Naive thymus-derived CD8-positive, alpha-beta T cell (primary cell): ENCODE measurements at regions of chr17 and their contacts with region 1.

Region 1: DNA sequence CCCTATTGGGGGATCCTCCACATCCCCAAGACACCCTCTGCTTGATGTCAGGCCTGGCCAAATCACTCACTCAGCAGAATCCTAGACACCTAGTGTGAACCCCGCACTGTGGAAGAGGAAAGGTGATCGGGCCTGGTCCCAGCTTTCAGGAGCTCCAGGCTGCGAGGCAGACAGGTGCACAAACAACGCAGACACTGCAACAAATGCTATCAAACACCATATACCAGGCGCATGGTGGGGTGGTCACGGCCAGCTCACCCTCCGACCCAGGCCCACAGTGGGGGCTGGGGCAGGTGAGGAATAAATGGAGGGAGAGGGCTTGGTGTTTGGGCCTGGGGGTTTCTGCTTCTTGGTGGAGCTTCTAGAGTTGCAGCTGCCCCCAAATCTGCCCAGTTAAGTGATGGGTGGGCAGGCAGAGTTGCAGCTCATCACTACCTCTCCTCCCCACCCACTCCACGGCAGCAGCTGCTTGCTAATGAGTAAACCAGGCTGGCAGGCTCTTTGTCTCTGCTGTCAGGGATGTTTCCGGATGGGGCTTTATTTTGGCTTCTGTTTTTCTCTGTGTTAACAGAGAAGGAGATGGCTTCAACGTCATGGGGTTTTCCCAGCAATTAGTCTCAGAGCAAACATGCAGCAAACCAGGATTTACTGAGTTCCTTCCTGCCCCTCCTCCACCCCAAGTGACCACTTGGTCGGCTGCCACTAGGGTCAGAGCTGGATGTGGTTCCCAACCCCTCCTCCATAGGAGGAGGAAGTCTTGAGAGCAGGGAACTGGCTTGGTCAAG is 46.6 kb downstream of the PECAM1 start:
- DNase-seq: no peak
- ATAC-seq: no peak
- H3K4me3 Mint-ChIP-seq: no peak overlapping the region
- H3K27ac Mint-ChIP-seq: peak overlapping the region in 9 of 10 donors; percentile 43 to 83 (median 79)
- H3K4me1 Mint-ChIP-seq: peaks cover 5 to 49% (median 33%) of the 10 kb centered on the region in 4 donors
- H3K27me3 Mint-ChIP-seq: no peaks in the 10 kb centered on the region

Region 2: GRCh38 chr17:64399071-64399766 is 55.2 kb after region 1 on chr17:
- POLR2A ChIA-PET with region 1: interaction called, 56 read pairs
- DNase-seq: no peak
- ATAC-seq: no peak
- H3K4me3 Mint-ChIP-seq: peak overlapping the region; percentile 32 to 79 (median 48)
- H3K27ac Mint-ChIP-seq: peak overlapping the region; percentile 56 to 99 (median 87)
- H3K4me1 Mint-ChIP-seq: peaks cover 25 to 79% (median 49%) of the 10 kb centered on the region in 4 donors
- H3K27me3 Mint-ChIP-seq: no peaks in the 10 kb centered on the region

Region 3: DNA sequence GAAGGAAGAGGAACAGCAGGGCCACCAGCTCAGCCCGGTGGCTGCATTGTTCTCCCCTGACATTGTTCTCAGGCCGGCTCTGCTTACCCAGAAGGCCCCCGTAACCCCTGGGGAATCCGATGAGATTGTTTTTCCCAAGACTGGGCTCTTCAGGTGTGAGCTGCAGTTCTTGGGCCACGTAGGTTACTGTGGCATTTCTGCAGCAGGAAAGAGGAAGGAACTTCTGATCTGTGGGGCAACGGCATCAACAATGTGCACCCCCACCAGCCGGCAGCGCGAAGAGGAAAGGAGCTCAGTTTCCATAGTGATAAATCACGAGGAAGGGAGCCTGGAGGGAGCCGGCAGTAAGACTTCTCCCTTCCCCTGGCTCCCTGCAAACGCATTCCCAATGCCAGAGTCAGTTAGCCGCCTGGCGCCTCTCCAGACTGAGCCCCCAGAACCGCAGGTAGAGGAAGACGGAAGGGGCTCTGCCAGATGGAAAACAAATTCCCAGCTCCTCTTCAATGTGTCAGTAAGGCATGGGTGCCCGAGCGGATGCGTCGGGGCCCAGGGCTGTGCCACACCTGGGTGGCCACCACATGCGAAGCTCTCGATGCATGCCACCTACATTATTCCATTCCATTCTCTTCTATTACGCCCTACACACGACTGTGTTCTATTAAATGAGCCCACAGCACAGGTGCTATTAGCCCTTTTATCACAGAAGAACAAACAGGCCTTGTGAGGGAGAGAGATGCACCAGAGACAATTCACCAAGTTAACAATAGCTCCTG is 68.1 kb after region 1 on chr17:
- POLR2A ChIA-PET with region 1: interaction called, 10 read pairs
- DNase-seq: peak in 2 of 10 donors; percentile 31 to 68
- ATAC-seq: peak; percentile 54 to 76
- H3K4me3 Mint-ChIP-seq: peak overlapping the region; percentile 63 to 88 (median 80)
- H3K27ac Mint-ChIP-seq: peak overlapping the region; percentile 53 to 91 (median 76)
- H3K4me1 Mint-ChIP-seq: peaks cover 21 to 40% (median 32%) of the 10 kb centered on the region in 4 donors
- H3K27me3 Mint-ChIP-seq: no peaks in the 10 kb centered on the region